Activated naive CD4-positive, alpha-beta T cell treated with anti-CD3 and anti-CD28 coated beads, Interleukin-2, amount 10 ng/mL, durations not matched to agents 7 days and 5 days (primary cell): ENCODE measurements at regions of chr12 and their contacts with region 1.

Region 1: GRCh38 chr12:57904848-57905811 is 36.2 kb upstream of the ATP23 start:
- DNase-seq: peak; percentile 88
- H3K4me3 Mint-ChIP-seq: no peak overlapping the region
- H3K27ac Mint-ChIP-seq: no peak overlapping the region
- H3K4me1 Mint-ChIP-seq: peaks cover 6% of the 10 kb centered on the region
- H3K27me3 Mint-ChIP-seq: peaks cover 39% of the 10 kb centered on the region

Region 2: GRCh38 chr12:57756406-57757341 is 148.5 kb before region 1 on chr12:
- CTCF ChIA-PET with region 1: interaction called, 26 read pairs
- DNase-seq: peak; percentile 77
- H3K4me3 Mint-ChIP-seq: peak overlapping the region; percentile 81
- H3K27ac Mint-ChIP-seq: peak overlapping the region; percentile 70
- H3K4me1 Mint-ChIP-seq: peaks cover 56% of the 10 kb centered on the region
- H3K27me3 Mint-ChIP-seq: peaks cover 4% of the 10 kb centered on the region

Region 3: DNA sequence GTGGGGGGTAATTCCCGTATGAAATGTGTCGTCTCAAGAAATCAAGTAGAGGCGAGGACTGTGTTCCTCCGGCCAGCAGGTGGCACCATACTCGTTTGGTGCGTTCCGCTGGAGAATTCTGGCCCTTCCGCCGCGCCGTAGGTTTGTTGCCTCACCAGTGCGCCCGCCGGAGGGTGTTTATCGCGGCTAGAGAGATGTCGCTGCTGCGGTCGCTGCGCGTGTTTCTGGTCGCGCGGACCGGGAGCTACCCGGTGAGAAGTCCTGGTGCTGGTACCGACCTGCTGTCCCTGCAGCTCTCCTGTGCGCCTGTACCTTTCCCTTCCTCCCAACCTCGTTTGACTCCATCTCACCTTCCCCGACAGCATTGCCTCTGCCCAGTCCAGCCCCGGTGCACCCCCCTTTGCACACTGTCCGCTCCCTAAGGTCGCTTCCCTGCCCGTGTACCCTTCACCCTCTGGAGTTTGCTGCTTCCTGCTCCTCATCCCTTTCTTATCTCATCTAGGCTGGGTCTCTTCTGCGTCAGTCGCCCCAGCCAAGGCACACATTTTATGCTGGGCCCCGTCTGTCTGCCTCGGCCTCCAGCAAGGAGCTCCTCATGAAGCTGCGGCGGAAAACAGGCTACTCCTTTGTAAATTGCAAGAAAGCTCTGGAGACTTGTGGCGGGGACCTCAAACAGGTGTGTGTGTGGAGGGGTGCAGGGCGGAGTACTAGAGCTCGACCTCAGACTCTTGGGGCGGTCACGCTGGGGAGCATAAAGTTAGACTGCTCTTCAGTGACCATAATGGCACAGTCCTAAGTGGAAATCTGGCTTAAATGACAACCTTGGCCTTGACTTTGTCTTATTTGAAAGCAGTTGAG is 122.3 kb before region 1 on chr12 and contains the start of gene TSFM:
- CTCF ChIA-PET with region 1: interaction called, 12 read pairs
- DNase-seq: peak; percentile 98
- H3K4me3 Mint-ChIP-seq: peak within 1 kb of the TSS; percentile 99
- H3K27ac Mint-ChIP-seq: peak within 1 kb of the TSS; percentile 95
- H3K4me1 Mint-ChIP-seq: peaks cover 50% of the 10 kb centered on the region
- H3K27me3 Mint-ChIP-seq: no peaks in the 10 kb centered on the region

Region 4: GRCh38 chr12:57829025-57829777 is 75.9 kb before region 1 on chr12:
- CTCF ChIA-PET with region 1: interaction called, 107 read pairs
- DNase-seq: no peak
- H3K4me3 Mint-ChIP-seq: no peak overlapping the region
- H3K27ac Mint-ChIP-seq: no peak overlapping the region
- H3K4me1 Mint-ChIP-seq: peaks cover 41% of the 10 kb centered on the region
- H3K27me3 Mint-ChIP-seq: no peaks in the 10 kb centered on the region

Region 5: GRCh38 chr12:57846577-57847319 is 58.4 kb before region 1 on chr12 and contains the start of gene CTDSP2:
- CTCF ChIA-PET with region 1: interaction called, 51 read pairs
- DNase-seq: peak; percentile 94
- H3K4me3 Mint-ChIP-seq: peak within 1 kb of the TSS; percentile 84
- H3K27ac Mint-ChIP-seq: peak within 1 kb of the TSS; percentile 82
- H3K4me1 Mint-ChIP-seq: peaks cover 39% of the 10 kb centered on the region
- H3K27me3 Mint-ChIP-seq: peaks cover 45% of the 10 kb centered on the region

Region 6: DNA sequence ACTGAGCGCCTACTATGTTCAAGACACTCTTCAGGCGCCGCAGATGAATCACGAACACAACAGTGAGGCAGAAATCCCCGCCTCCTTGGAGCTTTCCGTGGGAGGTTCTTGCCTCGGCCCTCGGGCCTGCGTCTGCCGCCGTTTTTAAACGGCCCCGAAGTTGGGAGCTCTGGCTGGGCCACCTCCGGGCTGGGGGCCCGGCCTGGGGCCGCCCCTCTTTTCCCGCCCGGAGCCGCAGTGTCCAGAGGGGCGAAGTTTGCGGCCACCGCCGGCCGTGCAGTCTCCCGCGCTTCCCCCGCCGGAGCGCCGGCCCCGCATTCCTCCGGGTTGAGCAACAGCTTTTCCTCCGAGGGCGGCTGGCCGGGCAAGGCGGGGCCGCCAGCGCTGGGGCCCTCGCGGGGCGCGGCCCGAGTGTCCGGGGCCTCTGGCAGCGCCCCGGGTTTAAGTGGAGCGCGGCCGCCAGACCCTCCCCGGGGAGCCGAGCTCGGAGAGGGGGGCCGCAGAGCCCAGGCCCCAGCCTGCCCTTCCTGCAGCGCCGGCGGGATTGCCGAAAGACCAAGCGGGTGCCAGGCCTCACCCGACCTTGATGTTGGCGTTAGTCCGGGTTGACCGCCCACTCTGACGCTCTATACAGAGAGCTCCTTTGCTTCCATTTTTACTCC is 39.9 kb before region 1 on chr12:
- CTCF ChIA-PET with region 1: no interaction called
- DNase-seq: peak; percentile 67
- H3K4me3 Mint-ChIP-seq: peak overlapping the region; percentile 68
- H3K27ac Mint-ChIP-seq: no peak overlapping the region
- H3K4me1 Mint-ChIP-seq: peaks cover 8% of the 10 kb centered on the region
- H3K27me3 Mint-ChIP-seq: peaks cover 53% of the 10 kb centered on the region

Region 7: DNA sequence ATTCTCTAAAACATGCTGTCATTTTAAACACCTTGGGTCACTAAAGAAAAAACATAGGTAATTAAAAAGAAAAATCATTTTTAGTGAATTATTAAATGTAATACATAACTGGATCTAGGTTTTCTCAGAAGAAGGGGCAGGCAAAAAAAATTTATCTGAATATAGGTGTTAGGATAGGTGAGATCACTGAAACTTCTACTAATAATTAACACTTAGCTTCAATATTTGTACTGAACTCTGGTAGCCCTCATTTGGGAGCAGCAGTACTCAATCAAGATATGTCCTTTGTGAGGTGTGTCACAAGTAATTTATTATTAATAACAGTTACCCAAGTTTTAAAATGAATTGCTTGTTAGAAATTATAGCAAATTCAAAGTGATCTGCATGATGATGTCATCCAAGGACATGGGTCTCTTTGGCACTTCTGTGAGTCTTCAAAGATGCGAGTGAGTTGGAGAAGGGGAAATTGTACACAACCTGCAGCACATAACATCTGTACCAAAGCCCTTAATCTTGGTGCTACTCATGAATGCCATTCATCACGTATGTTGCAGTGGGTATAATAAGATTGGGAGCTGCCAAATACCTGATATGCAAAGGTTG is 139.9 kb after region 1 on chr12:
- CTCF ChIA-PET with region 1: no interaction called
- DNase-seq: no peak
- H3K4me3 Mint-ChIP-seq: no peak overlapping the region
- H3K27ac Mint-ChIP-seq: no peak overlapping the region
- H3K4me1 Mint-ChIP-seq: no peaks in the 10 kb centered on the region
- H3K27me3 Mint-ChIP-seq: peaks cover 13% of the 10 kb centered on the region